ENCODE measurements at regions of chr7 and their contacts with region 1.

Region 1: DNA sequence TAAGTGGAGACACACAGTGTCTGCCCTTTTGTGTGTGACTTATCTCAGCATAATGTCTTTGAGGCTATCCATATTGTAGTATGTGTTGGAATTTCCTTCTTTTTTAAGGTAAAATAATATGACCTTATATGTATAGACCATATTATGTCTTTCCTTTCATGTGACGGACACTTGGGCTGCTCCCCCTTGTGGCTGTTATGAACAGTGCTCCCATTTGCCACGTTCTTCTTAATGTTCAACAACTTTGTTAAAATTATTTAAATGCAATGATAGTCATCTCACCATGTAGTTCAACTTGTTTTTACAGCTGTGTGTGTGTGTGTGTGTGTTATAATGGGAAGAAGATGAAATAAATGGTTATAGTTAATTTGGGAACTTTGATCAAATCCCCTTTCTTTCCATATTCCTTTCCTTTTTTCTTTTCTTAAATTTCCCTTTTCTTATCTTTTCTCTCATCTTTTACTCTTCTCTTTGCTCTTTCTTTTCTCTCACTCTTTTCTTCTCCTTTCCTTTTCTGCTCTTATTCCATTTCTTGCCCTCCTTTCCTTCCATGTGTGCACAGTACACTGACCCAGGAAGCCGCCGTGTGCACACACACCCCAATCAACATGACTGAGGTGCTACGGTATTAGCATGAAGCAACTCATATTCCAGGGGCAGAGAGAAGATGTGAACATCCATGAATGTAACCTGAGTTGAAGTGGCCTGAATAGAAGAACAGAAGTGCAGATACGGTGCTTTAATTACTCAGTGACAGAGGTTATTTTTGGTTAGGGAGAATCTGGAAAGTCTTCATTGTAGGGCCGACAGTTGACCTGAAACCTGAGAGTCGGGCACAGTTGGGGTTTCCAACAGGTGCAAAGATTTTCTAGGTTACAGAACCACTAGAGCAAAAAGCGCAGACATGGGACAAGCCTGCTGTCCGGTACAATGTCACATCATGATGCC is 596.7 kb downstream of the SDK1 start:
- DNase-seq: peak in 2 of 10 donors; percentile 36 to 49
- H3K4me3 ChIP-seq: no peak overlapping the region
- H3K27ac ChIP-seq: no peak overlapping the region
- H3K27me3 ChIP-seq: no peaks in the 10 kb centered on the region
- CTCF ChIP-seq: peak; percentile 49 to 89 (median 81)

Region 2: GRCh38 chr7:3300651-3301378 is 596.9 kb before region 1 on chr7 and contains the start of gene SDK1:
- intact Hi-C with region 1: loop called in 1 of 2 experiments (anchors 10 kb)
- DNase-seq: peak; percentile 68 to 92 (median 82)
- H3K4me3 ChIP-seq: peak within 1 kb of the TSS; percentile 42 to 78 (median 63)
- H3K27ac ChIP-seq: peak within 1 kb of the TSS in 13 of 59 donors; percentile 5 to 82 (median 45)
- H3K27me3 ChIP-seq: no peaks in the 10 kb centered on the region
- CTCF ChIP-seq: peak; percentile 55 to 99 (median 89)
- total RNA-seq, gene SDK1: 2.4 to 16.4 (median 8.6) TPM

Region 3: DNA sequence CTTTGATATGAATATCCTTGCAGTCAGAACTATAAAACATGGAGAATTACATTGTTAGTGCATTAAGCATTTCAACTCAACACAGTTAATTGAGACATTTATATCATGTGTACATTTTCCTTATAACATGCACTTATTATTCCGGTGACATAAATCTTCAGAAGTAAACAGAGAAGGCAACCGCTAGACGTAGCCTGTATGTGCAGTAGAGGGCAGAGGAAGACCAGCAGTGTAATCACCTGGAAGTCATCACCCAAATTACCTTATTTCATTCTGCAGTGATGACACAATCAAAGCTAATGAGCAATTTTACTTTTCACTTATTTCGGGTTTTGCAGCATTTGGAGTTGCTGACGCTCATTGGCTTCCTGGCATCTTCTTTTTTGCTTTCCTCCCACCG is 202.1 kb before region 1 on chr7:
- intact Hi-C with region 1: loop called in 1 of 2 experiments (anchors 10 kb)
- DNase-seq: no peak
- H3K4me3 ChIP-seq: no peak overlapping the region
- H3K27ac ChIP-seq: no peak overlapping the region
- H3K27me3 ChIP-seq: no peaks in the 10 kb centered on the region
- CTCF ChIP-seq: peak in 51 of 56 donors; percentile 20 to 86 (median 57)

Region 4: GRCh38 chr7:3722396-3722922 is 175.3 kb before region 1 on chr7:
- intact Hi-C with region 1: loop called in 1 of 2 experiments (anchors 10 kb)
- DNase-seq: peak in 5 of 10 donors; percentile 27 to 56 (median 46)
- H3K4me3 ChIP-seq: peak overlapping the region in 17 of 59 donors; percentile 1 to 37 (median 21)
- H3K27ac ChIP-seq: no peak overlapping the region
- H3K27me3 ChIP-seq: no peaks in the 10 kb centered on the region
- CTCF ChIP-seq: peak in 53 of 56 donors; percentile 19 to 72 (median 48)

Region 5: DNA sequence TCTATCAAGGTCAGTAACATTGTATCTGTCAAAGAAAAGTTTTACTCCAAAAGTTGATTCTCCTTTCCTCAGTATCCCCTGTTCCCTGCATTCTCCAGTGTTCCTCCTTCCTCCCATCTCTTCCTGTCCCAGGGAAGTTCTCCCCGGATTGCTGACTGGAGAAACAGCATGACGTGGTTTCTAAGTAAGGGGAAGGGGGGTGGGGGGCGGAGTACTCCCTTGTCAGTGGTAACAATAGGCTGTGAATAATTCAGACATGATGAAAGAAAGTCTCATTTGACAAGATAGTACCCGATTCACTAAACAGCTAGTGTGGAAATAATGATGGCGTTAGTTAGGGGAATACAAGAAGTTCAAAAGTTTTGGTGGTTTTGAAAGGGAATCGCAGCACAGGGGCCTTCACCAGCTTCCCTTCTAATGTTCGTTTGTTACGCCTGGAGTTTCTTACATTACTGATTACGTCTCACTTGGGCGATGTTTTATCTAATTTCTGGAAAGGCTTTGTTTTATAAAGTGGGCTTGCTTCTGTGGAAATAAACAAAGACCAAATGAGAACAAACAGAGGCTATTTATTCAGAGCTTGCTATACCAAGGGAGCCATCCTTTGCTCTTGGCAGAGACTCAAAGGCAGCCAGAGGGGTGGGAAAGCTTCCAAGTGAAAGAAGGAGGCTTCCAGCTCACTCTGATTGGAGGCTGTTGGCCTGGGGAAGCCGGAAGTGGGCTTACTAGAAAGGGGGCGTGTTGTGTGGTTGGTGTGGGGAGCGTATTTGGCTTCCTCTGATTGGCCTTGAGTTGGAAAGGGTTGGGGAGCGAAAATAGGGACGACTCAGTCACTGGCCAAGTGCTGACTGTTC is 143.0 kb before region 1 on chr7:
- intact Hi-C with region 1: loop called in 1 of 2 experiments (anchors 5 kb)
- DNase-seq: peak; percentile 40 to 83 (median 65)
- H3K4me3 ChIP-seq: peak overlapping the region in 53 of 59 donors; percentile 1 to 56 (median 28)
- H3K27ac ChIP-seq: peak overlapping the region in 58 of 59 donors; percentile 39 to 94 (median 82)
- H3K27me3 ChIP-seq: no peaks in the 10 kb centered on the region
- CTCF ChIP-seq: peak in 9 of 56 donors; percentile 3 to 28 (median 18)

Region 6: DNA sequence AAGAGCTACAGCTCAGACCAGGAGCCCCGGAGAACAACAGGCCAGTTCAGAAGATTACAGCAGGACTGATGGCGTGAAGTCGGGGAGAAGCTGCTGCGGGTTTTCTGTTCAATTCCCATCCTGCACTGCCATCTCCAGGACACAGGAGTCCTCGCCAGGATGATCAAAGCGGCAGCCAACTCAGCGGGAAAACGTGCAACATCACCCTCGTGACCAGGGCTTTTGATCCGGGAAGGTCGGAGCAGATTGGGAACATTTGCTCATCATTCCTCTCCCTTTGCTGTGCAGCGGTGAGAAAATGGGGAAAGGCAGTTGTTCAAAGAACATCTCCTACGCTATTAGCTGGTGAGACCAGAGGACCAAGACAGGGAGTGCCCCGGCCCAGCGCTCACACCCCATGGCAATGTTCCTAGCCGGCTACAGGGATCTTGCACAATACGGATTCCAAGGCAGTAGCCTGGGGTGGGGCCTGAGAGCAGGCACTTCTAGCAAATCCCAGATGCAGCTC is 734.0 kb after region 1 on chr7:
- intact Hi-C with region 1: loop called in 1 of 2 experiments (anchors 5 kb)
- DNase-seq: peak; percentile 44 to 86 (median 78)
- H3K4me3 ChIP-seq: peak overlapping the region in 56 of 59 donors; percentile 14 to 62 (median 42)
- H3K27ac ChIP-seq: peak overlapping the region in 41 of 59 donors; percentile 1 to 76 (median 55)
- H3K27me3 ChIP-seq: no peaks in the 10 kb centered on the region
- CTCF ChIP-seq: peak; percentile 52 to 92 (median 82)

Measured in dorsolateral prefrontal cortex (tissue), 120 donors.